GM10248 (cell line): ENCODE measurements at regions of chr1 and their contacts with region 1.

Region 1: DNA sequence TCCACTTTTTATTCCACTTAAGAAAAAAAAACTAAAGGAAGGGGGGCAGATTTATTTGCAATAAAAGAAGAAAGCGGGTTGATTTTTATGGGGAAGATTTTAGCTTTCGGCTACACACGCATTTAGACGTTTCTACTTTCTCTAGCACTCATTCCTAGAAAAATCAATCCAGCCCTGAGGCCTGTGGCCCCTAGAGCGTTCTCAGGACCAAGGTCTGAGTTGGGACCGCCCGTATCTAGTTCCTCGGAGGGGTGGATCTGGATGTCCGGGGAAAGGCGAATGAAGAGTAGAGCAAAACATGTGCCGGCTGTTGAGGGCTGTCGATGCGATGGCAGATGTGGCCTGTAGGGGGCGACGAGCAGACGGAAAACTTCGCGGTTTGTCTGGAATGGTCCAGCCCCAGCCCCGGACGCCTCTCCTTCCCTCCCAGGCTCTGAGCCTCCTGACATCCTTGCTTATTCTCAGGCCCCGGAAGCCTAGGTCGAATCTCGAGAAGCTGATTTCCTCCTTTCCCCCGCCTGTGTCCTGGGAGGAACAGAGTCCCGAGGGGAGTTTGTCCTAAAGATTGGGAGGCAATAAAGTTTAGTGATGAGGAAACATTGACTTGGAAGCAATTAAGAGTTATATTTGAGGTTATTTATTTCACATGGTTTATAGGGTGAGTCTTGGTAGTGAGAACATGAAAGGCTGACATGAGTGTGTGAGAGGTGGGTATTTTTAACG is 5.2 kb downstream of the FOXD3 start:
- DNase-seq: peak; percentile 79
- CTCF ChIP-seq: peak; percentile 81

Region 2: DNA sequence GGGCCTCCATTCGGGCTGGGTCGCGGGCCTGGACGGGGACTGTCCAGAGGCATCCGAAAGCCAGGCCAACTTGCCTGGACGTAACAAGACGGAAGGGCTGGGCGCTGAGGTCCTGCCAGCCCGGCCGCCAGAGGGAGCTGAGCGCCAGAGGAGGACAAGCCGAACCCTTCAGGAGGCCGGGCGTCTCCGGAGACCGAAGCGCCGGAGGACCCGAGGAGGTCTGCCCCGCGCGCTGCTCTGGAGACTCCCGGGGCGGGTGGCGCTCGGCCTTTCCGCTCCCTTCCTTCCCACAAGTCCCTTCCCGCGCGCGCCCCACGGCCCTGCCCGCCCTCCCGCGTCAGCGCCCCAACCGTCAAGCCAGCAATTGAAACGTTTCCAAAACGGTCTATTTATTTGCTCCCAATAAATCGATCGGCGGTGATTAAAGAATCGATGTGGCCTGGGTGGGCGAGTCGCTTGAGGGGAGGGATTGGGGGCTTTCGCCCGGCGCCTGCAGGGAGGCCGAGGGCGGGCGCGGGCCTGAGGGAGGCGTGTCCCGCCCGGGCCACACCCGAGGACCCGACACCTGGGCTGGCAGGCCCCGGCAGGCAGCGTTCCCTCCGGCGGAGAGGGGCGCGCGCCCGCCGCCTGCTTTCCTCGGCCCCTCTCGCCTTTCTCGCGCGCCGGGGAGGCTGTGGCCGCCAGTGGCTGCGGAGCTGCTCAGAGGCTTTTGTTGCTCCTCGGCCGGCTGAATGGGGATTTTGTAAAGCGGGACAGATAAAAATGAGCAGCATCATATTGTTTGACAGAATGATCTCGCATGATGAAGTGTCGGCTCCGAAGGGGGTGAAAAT is 10.4 kb before region 1 on chr1:
- CTCF ChIA-PET with region 1: interaction called, 48 read pairs
- POLR2A ChIA-PET with region 1: interaction called, 3 read pairs
- DNase-seq: peak; percentile 85
- CTCF ChIP-seq: peak; percentile 88

Region 3: DNA sequence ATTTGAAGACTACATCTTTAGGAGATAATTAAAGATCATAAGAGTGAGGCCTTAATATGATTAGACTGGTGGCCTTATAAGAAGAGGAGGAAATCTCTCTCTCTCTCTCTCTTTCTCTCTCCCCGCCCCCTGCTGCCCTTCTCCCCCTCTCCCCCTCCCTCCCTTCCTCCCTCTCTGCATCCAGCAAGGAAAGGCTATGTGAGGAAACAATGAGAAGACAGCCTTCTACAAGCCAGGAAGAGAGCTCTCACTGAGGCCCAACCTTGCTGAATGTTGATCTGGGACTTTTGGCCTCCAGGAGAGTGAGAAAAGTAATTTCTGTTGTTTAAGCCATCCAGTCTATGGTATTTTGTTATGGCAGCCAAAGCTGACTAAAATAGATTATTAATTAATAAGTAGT is 16.3 kb after region 1 on chr1:
- CTCF ChIA-PET with region 1: interaction called, 24 read pairs
- POLR2A ChIA-PET with region 1: no interaction called
- DNase-seq: no peak
- CTCF ChIP-seq: no peak

Region 4: GRCh38 chr1:63487336-63488065 is 159.9 kb after region 1 on chr1:
- CTCF ChIA-PET with region 1: no interaction called
- POLR2A ChIA-PET with region 1: no interaction called
- DNase-seq: no peak
- CTCF ChIP-seq: no peak